ENCODE measurements at regions of chr10 and their contacts with region 1.

Region 1: DNA sequence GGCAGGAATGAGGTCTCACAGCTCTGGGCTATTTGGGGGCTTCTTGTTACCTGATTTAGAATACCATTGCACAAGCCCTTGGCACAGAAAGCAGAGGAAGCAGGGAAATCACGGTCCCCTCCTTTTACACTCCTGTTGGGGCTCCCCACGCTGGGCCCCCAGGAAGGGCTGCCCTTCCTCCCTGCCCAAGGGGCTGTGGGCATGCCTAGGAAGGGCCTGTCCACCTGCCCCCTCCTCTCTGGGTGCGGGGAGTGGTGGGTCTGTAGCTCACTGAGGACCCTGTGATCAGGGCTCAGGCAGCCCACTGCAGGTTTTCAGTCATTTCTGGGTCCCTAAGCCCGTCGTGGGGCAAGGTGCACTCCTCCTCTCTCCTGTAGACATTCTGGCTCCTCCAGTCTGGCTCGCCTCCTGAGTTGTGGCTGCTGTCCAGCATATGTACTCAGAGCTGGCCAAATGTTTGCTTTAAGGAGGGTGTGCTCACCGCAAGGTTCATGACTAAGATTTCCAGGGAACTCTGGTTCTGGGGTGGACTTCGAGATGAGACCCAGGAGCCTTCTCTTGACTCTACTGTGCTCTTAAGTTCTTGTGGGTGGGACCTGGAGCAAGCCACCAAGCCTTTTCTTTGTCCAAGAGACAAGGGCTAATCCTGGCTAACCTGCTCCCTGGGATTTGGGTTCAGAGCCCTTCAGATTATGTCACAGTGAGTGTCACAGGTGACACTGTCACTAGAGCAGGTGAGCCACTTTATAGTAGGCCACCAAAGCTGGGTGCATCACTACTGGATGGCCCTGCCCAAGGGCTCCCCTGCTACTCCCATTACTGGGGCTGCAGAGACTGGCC is 56.0 kb downstream of the TACR2 start:
- DNase-seq: peak; percentile 89 to 94
- H3K4me3 ChIP-seq: no peak overlapping the region
- H3K27ac ChIP-seq: peak overlapping the region; percentile 89
- H3K4me1 ChIP-seq: peaks cover 50% of the 10 kb centered on the region
- H3K27me3 ChIP-seq: no peaks in the 10 kb centered on the region
- CTCF ChIP-seq: no peak

Region 2: DNA sequence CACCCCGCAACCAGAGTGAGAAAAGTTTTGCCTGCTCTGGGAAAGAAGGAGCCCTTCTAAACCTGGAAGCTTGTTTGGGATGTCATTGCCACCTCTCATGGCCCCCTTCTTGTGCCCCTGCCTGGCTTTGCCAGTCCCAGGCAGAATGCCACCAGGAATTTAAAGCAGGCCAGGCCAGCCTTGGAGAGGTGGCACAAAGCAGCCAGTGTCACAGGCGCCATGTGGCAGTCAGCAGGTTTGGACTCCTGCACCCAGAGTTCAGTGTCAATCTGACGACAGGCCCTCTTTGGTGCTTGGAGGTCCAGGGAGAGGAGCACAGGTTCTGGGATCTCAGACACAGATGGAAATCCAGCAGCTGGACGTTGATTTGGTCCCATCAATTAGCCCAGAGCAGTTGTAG is 69.7 kb before region 1 on chr10:
- CTCF ChIA-PET with region 1: no interaction called
- POLR2A ChIA-PET with region 1: interaction called, 13 read pairs
- intact Hi-C with region 1: no loop called
- DNase-seq: no peak
- H3K4me3 ChIP-seq: no peak overlapping the region
- H3K27ac ChIP-seq: no peak overlapping the region
- H3K4me1 ChIP-seq: no peaks in the 10 kb centered on the region
- H3K27me3 ChIP-seq: no peaks in the 10 kb centered on the region
- CTCF ChIP-seq: no peak

Region 3: GRCh38 chr10:69318106-69318866 is 42.4 kb before region 1 on chr10:
- CTCF ChIA-PET with region 1: no interaction called
- POLR2A ChIA-PET with region 1: interaction called, 6 read pairs
- intact Hi-C with region 1: loop called (anchors 1 kb)
- DNase-seq: peak; percentile 74 to 95
- H3K4me3 ChIP-seq: peak overlapping the region; percentile 97
- H3K27ac ChIP-seq: peak overlapping the region; percentile 73
- H3K4me1 ChIP-seq: peaks cover 64% of the 10 kb centered on the region
- H3K27me3 ChIP-seq: no peaks in the 10 kb centered on the region
- CTCF ChIP-seq: no peak

Region 4: DNA sequence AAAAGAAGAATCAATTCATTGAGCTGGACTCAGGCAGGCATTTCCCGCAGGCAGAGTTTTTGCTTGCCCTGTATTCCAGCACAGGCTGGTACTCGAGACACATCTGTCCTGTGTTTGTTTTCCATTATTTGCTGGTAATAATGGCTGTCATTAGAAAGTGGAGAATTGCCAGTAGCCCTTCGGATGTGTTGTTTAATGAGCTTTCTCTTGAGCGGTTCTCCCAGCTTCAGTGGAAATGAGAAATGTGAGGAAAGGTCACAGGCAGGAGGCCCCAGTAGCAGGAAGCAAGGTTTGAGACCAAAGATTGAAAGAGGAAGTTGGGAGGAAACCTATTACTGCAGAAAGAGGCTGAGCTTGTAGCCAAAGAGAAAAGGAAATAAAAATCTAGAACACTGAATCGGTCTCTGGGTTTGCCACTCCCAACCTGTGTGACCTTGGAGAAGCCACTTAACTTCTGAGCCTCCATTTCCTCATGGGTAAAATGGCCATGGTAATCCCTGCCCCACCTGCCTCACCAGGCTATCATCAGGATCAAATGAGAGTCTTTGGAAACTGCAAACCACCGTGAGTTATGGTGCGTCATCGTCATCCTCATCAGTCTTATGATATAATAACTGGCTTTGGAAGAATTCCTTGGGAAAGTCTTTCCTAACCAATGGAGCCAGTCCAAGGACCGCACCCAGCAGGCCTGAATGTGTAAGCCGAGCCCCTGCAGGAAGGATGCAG is 11.7 kb before region 1 on chr10:
- CTCF ChIA-PET with region 1: interaction called, 4 read pairs
- POLR2A ChIA-PET with region 1: interaction called, 3 read pairs
- intact Hi-C with region 1: loop called (anchors 1 kb)
- DNase-seq: peak; percentile 88 to 98
- H3K4me3 ChIP-seq: peak overlapping the region; percentile 14; the same call in 1 of the 2 replicates
- H3K27ac ChIP-seq: peak overlapping the region; percentile 89
- H3K4me1 ChIP-seq: peaks cover 79% of the 10 kb centered on the region
- H3K27me3 ChIP-seq: no peaks in the 10 kb centered on the region
- CTCF ChIP-seq: no peak

Region 5: DNA sequence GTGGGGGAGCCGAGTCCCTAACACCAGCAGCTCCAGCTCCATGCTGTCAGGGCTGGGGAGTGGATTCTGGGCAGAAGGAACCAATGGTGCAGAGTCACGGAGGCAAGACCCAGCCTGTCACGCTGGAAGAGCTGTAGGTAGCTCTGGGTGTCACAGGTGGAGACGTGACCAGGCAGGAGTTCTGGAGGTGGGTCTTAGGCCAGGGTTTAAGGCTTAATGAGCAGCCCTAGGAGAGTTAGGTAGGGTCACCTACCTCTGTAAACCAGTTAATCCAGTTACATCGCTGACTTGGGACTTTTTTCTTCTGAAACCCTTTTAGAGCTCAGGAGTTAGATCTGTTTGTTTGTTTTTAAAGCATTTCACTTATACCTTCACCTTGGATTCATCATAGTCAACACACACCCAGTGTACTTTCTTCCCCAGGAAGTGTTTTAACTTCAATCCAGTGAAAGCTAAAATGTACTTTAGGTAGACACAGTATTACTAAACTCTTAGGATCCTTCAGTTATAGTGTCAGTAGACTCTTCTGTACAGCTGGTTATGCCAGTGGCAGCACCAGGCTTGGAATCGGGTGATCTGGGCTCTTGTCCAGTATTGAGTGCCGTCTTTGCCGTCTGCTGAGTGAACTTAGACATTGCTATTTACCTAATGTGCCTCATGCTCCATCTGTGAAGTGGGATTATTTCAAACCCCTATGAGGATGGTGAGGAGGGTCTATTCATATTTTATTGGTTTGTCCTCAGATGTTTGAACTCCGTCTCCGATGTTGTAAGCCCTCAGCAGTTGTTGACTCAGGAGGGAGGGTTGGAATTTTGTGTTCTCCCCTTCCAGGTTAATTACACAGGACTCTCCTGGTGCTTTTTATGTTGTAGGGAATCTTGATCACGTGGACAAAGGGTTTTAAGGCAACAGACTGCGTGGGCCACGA is 25.0 kb after region 1 on chr10:
- CTCF ChIA-PET with region 1: interaction called, 3 read pairs
- POLR2A ChIA-PET with region 1: interaction called, 3 read pairs
- intact Hi-C with region 1: loop called (anchors 2 kb)
- DNase-seq: peak; percentile 69 to 97
- H3K4me3 ChIP-seq: peak overlapping the region; percentile 20
- H3K27ac ChIP-seq: peak overlapping the region; percentile 91
- H3K4me1 ChIP-seq: peaks cover 75% of the 10 kb centered on the region
- H3K27me3 ChIP-seq: no peaks in the 10 kb centered on the region
- CTCF ChIP-seq: no peak

Region 6: GRCh38 chr10:69515699-69516259 is 155.1 kb after region 1 on chr10:
- CTCF ChIA-PET with region 1: no interaction called
- POLR2A ChIA-PET with region 1: no interaction called
- intact Hi-C with region 1: no loop called
- DNase-seq: peak; percentile 57 to 74
- H3K4me3 ChIP-seq: no peak overlapping the region
- H3K27ac ChIP-seq: no peak overlapping the region
- H3K4me1 ChIP-seq: no peaks in the 10 kb centered on the region
- H3K27me3 ChIP-seq: no peaks in the 10 kb centered on the region
- CTCF ChIP-seq: peak; percentile 95

Region 7: DNA sequence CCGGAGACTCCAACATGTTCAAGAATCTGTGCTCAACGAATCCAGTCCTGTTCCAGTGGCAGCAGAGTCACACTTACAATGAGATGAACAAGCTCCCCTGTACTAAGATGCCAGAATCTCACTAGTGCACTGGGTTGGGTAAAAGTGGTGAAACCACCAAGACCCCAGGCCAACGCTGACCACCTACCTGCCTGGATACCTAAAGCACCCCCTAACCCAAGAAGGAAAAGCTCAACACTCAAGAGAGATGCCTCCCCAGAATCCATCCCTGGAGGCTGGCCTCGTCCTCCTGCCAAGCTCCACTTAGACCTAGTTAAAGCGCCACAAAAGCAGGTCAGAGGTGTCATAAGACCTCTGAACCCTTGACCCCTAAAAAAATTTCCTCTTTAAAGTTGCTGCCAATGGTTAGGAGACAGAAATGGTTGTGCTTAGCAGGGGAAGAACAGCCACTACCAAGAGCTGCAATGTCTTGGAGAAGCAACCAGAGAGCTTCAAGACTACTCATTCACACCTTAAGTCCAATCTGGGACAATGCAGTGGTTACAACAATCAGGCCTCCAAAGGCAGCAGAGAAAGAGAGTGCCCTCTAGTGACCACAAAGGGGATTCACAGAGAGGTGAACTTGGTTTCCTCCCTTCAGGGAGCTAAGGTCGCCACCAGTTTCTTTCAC is 597.3 kb after region 1 on chr10:
- CTCF ChIA-PET with region 1: no interaction called
- POLR2A ChIA-PET with region 1: no interaction called
- intact Hi-C with region 1: no loop called
- DNase-seq: peak; percentile 29 to 46
- H3K4me3 ChIP-seq: no peak overlapping the region
- H3K27ac ChIP-seq: no peak overlapping the region
- H3K4me1 ChIP-seq: no peaks in the 10 kb centered on the region
- H3K27me3 ChIP-seq: no peaks in the 10 kb centered on the region
- CTCF ChIP-seq: peak; percentile 91